Activated CD4-positive, alpha-beta T cell treated with anti-CD3 and anti-CD28 coated beads for 36 hours (primary cell): ENCODE measurements at regions of chr14 and their contacts with region 1.

Region 1: GRCh38 chr14:49879683-49880204 is 13.1 kb upstream of the ARF6 start:
- DNase-seq: peak; percentile 85
- ATAC-seq: peak; percentile 92
- H3K4me3 Mint-ChIP-seq: no peak overlapping the region
- H3K27ac Mint-ChIP-seq: peak overlapping the region; percentile 47
- H3K4me1 Mint-ChIP-seq: peaks cover 27% of the 10 kb centered on the region
- H3K27me3 Mint-ChIP-seq: no peaks in the 10 kb centered on the region

Region 2: DNA sequence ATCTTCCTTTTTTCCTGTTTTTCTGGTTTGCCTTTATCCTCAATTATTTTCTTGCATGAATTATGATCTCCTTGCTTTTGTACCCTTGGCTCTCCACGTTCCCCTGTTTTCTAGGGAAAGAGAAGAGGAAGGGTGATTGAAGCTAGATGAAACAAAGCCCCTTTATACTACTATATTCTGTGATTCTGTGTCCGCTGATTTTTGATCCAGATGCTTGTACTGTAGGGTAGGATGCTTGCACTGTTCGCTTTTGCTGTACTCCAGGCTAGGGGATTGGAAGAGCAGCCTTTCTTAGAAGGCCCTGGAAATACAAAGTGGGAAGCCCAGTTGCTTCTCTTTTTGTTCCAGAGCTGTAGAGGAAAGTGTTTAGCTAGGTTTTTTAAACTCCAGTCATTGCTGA is 146.8 kb before region 1 on chr14:
- CTCF ChIA-PET with region 1: no interaction called
- POLR2A ChIA-PET with region 1: no interaction called
- intact Hi-C with region 1: no loop called
- DNase-seq: no peak
- ATAC-seq: no peak
- H3K4me3 Mint-ChIP-seq: no peak overlapping the region
- H3K27ac Mint-ChIP-seq: no peak overlapping the region
- H3K4me1 Mint-ChIP-seq: no peaks in the 10 kb centered on the region
- H3K27me3 Mint-ChIP-seq: no peaks in the 10 kb centered on the region

Region 3: GRCh38 chr14:49761839-49762551 is 117.7 kb before region 1 on chr14:
- CTCF ChIA-PET with region 1: no interaction called
- POLR2A ChIA-PET with region 1: no interaction called
- intact Hi-C with region 1: no loop called
- DNase-seq: no peak
- ATAC-seq: no peak
- H3K4me3 Mint-ChIP-seq: no peak overlapping the region
- H3K27ac Mint-ChIP-seq: no peak overlapping the region
- H3K4me1 Mint-ChIP-seq: peaks cover 4% of the 10 kb centered on the region
- H3K27me3 Mint-ChIP-seq: no peaks in the 10 kb centered on the region

Region 4: DNA sequence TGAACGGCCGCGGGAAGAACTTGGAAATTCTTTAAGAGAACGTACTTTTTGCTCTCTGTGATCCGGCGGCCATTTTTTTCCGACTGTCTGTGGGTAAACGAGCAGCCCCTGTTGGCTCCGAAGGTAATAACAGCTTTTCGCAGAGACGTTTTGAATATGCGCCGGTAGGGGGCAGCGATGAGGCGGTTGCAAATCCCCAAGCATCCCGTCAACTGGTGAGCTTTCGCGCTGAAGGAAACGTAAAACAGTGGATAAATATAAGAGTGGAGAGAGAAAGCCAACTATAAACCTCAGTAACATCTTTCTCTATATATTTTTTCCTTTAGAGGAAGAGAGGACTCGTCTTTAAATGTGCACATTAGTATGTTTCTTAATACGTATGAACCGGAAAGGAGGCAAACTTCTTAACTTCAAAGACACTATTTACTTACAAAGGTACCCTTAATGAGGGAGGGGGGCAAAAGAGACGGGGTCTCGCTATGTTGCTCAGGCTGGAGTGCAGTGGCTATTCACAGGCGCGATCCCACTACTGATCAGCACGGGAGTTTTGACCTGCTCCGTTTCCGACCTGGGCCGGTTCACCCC is 17.6 kb before region 1 on chr14:
- CTCF ChIA-PET with region 1: interaction called, 10 read pairs
- POLR2A ChIA-PET with region 1: interaction called, 4 read pairs
- intact Hi-C with region 1: no loop called
- DNase-seq: peak; percentile 92
- ATAC-seq: peak; percentile 13
- H3K4me3 Mint-ChIP-seq: no peak overlapping the region
- H3K27ac Mint-ChIP-seq: no peak overlapping the region
- H3K4me1 Mint-ChIP-seq: peaks cover 20% of the 10 kb centered on the region
- H3K27me3 Mint-ChIP-seq: no peaks in the 10 kb centered on the region

Region 5: GRCh38 chr14:49867831-49868723 is 11.7 kb before region 1 on chr14:
- CTCF ChIA-PET with region 1: interaction called, 18 read pairs
- POLR2A ChIA-PET with region 1: interaction called, 4 read pairs
- intact Hi-C with region 1: no loop called
- DNase-seq: peak; percentile 100
- ATAC-seq: peak; percentile 87
- H3K4me3 Mint-ChIP-seq: peak overlapping the region; percentile 98
- H3K27ac Mint-ChIP-seq: peak overlapping the region; percentile 96
- H3K4me1 Mint-ChIP-seq: peaks cover 22% of the 10 kb centered on the region
- H3K27me3 Mint-ChIP-seq: no peaks in the 10 kb centered on the region

Region 6: GRCh38 chr14:50103558-50103957 is 223.8 kb after region 1 on chr14:
- CTCF ChIA-PET with region 1: interaction called, 12 read pairs
- POLR2A ChIA-PET with region 1: no interaction called
- intact Hi-C with region 1: loop called in 1 of 2 experiments (anchors 1 kb)
- DNase-seq: no peak
- ATAC-seq: no peak
- H3K4me3 Mint-ChIP-seq: peak overlapping the region; percentile 64
- H3K27ac Mint-ChIP-seq: peak overlapping the region; percentile 83
- H3K4me1 Mint-ChIP-seq: peaks cover 48% of the 10 kb centered on the region
- H3K27me3 Mint-ChIP-seq: no peaks in the 10 kb centered on the region

Region 7: GRCh38 chr14:50109342-50109741 is 229.6 kb after region 1 on chr14:
- CTCF ChIA-PET with region 1: interaction called, 12 read pairs
- POLR2A ChIA-PET with region 1: interaction called, 3 read pairs
- intact Hi-C with region 1: loop called in 1 of 2 experiments (anchors 1 kb)
- DNase-seq: no peak
- ATAC-seq: no peak
- H3K4me3 Mint-ChIP-seq: no peak overlapping the region
- H3K27ac Mint-ChIP-seq: no peak overlapping the region
- H3K4me1 Mint-ChIP-seq: peaks cover 32% of the 10 kb centered on the region
- H3K27me3 Mint-ChIP-seq: no peaks in the 10 kb centered on the region

Region 8: DNA sequence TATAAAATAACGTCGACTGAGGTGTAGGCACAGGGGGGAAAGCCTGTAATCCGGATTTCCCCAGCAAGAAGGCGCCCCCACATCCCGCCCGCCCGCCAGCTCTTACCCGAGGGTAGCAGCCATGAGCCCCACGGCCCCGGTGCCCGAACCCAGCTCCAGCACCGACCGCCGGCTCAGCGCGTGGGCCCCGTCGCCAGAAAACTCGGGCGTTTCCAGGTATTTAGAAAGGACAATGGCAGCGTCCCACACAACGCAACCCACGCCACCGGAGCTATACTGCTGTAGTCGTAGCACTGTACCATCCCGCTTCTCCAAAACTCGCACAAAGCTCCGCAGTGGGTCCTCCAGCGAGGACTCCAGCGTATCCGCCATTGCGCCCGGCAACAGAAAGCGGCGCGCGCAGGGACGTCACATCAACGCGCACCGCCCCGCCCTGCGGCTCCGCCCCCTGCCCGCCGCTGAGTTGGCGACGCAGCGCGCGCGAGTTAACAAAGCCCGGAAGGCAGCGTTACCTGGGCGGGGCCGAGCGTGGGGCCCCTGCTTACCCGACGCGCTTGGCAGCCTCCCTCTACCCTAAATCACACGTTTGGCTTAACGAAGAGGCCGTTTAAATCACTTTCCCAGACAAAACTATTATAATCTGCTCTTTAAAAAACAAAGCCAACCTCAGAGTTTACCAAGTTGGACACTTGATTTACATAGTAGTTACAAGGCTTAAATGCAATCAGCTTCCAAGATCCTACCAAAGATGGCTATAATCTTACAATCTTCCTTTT is 236.6 kb after region 1 on chr14 and contains the start of gene VCPKMT:
- CTCF ChIA-PET with region 1: interaction called, 12 read pairs
- POLR2A ChIA-PET with region 1: interaction called, 3 read pairs
- intact Hi-C with region 1: no loop called
- DNase-seq: peak; percentile 98
- ATAC-seq: peak; percentile 99
- H3K4me3 Mint-ChIP-seq: peak within 1 kb of the TSS; percentile 95
- H3K27ac Mint-ChIP-seq: peak within 1 kb of the TSS; percentile 97
- H3K4me1 Mint-ChIP-seq: peaks cover 25% of the 10 kb centered on the region
- H3K27me3 Mint-ChIP-seq: no peaks in the 10 kb centered on the region
- total RNA-seq, gene VCPKMT: 6.6 to 10.4 TPM